A673 (cell line): ENCODE measurements at regions of chr1 and their contacts with region 1.

Region 1: GRCh38 chr1:161973924-161974845 is 49.5 kb downstream of the OLFML2B start:
- DNase-seq: no peak
- H3K4me3 ChIP-seq: no peak overlapping the region
- H3K27ac ChIP-seq: no peak overlapping the region
- H3K4me1 ChIP-seq: no peaks in the 10 kb centered on the region
- H3K27me3 ChIP-seq: no peaks in the 10 kb centered on the region
- CTCF ChIP-seq: no peak

Region 2: GRCh38 chr1:161962091-161962887 is 11.9 kb before region 1 on chr1:
- CTCF ChIA-PET with region 1: no interaction called
- POLR2A ChIA-PET with region 1: no interaction called
- intact Hi-C with region 1: no loop called
- DNase-seq: peak; percentile 86
- H3K4me3 ChIP-seq: peak overlapping the region; percentile 33
- H3K27ac ChIP-seq: peak overlapping the region; percentile 67
- H3K4me1 ChIP-seq: peaks cover 28% of the 10 kb centered on the region
- H3K27me3 ChIP-seq: no peaks in the 10 kb centered on the region
- CTCF ChIP-seq: no peak

Region 3: GRCh38 chr1:162003826-162004208 is 29.6 kb after region 1 on chr1:
- CTCF ChIA-PET with region 1: no interaction called
- POLR2A ChIA-PET with region 1: no interaction called
- intact Hi-C with region 1: loop called (anchors 2 kb)
- DNase-seq: no peak
- H3K4me3 ChIP-seq: no peak overlapping the region
- H3K27ac ChIP-seq: no peak overlapping the region
- H3K4me1 ChIP-seq: no peaks in the 10 kb centered on the region
- H3K27me3 ChIP-seq: no peaks in the 10 kb centered on the region
- CTCF ChIP-seq: no peak